Motor neuron (in vitro differentiated cells): ENCODE measurements at regions of chr1 and their contacts with region 1.

Region 1: DNA sequence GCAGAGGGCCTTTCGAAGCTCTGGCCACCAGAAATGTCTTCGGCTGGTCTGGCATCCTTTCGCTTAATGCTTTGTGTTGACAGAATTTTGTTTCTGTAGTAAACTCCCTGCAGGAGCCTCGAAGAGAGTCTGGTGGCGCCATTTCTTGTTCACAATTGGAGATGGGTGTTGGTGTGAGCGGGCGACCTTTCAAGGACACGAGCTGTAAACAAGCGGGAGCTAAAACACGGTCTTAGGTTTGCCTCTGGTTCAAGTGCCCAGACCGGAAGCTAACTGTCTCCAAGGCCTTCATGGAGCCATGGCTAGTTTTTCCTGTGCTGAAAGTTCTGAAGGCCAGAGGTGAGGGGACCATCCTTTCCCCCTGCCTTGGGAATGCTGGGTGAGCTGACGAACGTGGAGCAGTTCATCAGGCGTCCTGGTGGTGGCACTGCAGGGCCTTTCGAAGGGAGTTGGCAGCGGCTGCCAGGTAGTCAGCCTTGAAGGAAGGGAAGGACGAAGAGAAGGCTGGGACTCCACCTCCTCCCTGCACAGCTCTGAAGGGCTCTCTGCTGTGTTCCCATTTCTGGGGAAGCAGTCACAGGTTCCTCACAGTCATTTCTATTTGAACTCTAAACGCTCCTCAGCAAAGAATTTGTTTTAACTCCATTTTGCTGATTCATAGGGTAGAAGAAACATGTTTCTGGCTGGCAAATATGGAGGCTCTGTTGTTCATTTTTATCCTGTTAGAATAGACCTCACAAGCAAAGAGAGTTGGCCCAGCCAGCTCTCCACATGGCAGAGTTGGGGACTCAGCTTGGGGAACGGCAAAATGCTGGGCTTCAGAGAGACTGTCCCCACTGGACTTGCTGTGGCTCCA is 35.2 kb downstream of the URB2 start:
- ATAC-seq: peak; percentile 91 to 98 (median 96)
- H3K4me3 ChIP-seq: no peak overlapping the region
- H3K27ac ChIP-seq: no peak overlapping the region
- H3K4me1 ChIP-seq: peaks cover 0 to 2% of the 10 kb centered on the region in 2 donors

Region 2: GRCh38 chr1:229848752-229849677 is 187.8 kb after region 1 on chr1:
- in situ Hi-C with region 1: loop called in 1 of 9 experiments (anchors 25 kb)
- ATAC-seq: peak; percentile 34 to 85 (median 72)
- H3K4me3 ChIP-seq: no peak overlapping the region
- H3K27ac ChIP-seq: no peak overlapping the region
- H3K4me1 ChIP-seq: peaks cover 0 to 5% of the 10 kb centered on the region in 2 donors

Region 3: DNA sequence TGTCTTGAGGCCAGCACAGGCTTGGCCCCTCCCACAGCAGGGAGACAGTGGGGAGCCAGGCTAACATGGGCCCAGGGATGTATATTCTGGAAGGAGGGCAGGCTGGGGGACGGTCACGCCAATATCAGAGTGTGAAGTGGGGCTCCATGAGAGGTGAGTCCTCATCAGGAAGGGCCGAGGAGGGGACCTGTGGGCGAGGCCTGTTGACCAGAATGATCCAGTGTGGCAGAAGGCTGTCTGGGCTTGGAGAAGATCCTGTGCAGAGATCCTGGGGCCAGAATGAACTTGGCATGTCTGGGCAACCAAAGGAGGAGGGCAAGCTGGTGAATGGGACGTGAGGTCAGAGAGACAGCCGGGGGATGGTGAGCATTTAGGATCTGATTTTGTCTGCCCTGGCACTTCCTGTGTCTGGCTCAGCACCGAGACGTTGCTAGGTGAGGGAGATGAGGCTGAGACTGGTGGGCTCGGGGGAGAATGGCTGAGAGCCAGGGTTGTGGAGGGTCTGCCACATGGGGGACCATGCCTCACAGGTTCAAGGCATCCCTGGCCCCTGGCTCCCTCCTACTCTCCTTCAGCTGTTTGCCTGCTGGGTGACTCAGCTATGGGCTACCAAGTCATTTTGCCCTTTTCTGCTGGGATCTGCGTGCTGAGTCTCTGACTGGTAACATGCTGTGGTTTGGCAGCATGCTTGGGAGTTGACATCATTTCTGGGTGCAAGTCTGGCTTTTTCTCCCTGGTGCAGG is 423.1 kb after region 1 on chr1:
- in situ Hi-C with region 1: loop called in 1 of 9 experiments (anchors 25 kb)
- ATAC-seq: peak in 7 of 8 experiments; percentile 24 to 94 (median 85)
- H3K4me3 ChIP-seq: no peak overlapping the region
- H3K27ac ChIP-seq: no peak overlapping the region
- H3K4me1 ChIP-seq: peaks cover 10 to 28% of the 10 kb centered on the region in 2 donors

Region 4: GRCh38 chr1:230268366-230269170 is 607.3 kb after region 1 on chr1:
- in situ Hi-C with region 1: loop called in 1 of 9 experiments (anchors 25 kb)
- ATAC-seq: peak; percentile 71 to 96 (median 80)
- H3K4me3 ChIP-seq: no peak overlapping the region
- H3K27ac ChIP-seq: peak overlapping the region in 1 of 2 donors; percentile 20
- H3K4me1 ChIP-seq: peaks cover 24 to 33% of the 10 kb centered on the region in 2 donors

Region 5: GRCh38 chr1:230310381-230311163 is 649.3 kb after region 1 on chr1:
- in situ Hi-C with region 1: loop called in 8 of 9 experiments (anchors 25 kb)
- ATAC-seq: peak; percentile 68 to 98 (median 94)
- H3K4me3 ChIP-seq: no peak overlapping the region
- H3K27ac ChIP-seq: no peak overlapping the region
- H3K4me1 ChIP-seq: no peaks in the 10 kb centered on the region